ENCODE measurements at regions of chr9 and their contacts with region 1.

Region 1: GRCh38 chr9:95004411-95005277 is 278.1 kb downstream of the AOPEP start:
- DNase-seq: peak; percentile 48
- ATAC-seq: peak; percentile 79
- H3K4me3 ChIP-seq: peak overlapping the region; percentile 78 to 92 (median 86)
- H3K27ac ChIP-seq: peak overlapping the region; percentile 99
- H3K4me1 ChIP-seq: peaks cover 50% of the 10 kb centered on the region
- H3K27me3 ChIP-seq: no peaks in the 10 kb centered on the region; a peak in 1 of 5 replicates
- CTCF ChIP-seq: no peak
- EP300 ChIP-seq: peak in 1 of 2 experiments; percentile 38; a peak in 1 of 4 replicates
- POLR2A ChIP-seq: peak; percentile 56 to 63
- RAD21 ChIP-seq: peak; percentile 56

Region 2: DNA sequence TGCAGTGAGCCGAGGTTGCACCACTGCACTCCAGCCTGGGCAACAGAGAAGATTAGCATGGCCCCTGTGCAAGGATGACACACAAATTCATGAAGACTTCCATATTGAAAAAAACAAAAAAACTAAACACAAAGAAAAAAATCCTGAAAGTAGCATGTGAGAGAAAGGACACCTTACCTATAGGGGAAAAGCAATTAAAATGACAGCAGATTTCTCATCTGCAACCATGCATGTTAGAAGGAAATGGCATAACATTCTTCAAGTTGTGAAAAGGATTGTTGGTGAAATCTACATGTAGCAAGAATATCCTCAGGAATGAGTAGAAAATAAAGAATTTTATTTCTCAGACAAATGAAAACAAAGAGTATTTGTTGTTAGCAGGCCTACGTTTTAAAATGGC is 759.0 kb before region 1 on chr9:
- CTCF ChIA-PET with region 1: no interaction called
- POLR2A ChIA-PET with region 1: no interaction called
- in situ Hi-C with region 1: no loop called
- intact Hi-C with region 1: no loop called
- DNase-seq: no peak
- ATAC-seq: no peak
- H3K4me3 ChIP-seq: no peak overlapping the region
- H3K27ac ChIP-seq: no peak overlapping the region
- H3K4me1 ChIP-seq: no peaks in the 10 kb centered on the region
- H3K27me3 ChIP-seq: no peaks in the 10 kb centered on the region
- CTCF ChIP-seq: no peak
- EP300 ChIP-seq: no peak
- POLR2A ChIP-seq: no peak
- RAD21 ChIP-seq: no peak

Region 3: DNA sequence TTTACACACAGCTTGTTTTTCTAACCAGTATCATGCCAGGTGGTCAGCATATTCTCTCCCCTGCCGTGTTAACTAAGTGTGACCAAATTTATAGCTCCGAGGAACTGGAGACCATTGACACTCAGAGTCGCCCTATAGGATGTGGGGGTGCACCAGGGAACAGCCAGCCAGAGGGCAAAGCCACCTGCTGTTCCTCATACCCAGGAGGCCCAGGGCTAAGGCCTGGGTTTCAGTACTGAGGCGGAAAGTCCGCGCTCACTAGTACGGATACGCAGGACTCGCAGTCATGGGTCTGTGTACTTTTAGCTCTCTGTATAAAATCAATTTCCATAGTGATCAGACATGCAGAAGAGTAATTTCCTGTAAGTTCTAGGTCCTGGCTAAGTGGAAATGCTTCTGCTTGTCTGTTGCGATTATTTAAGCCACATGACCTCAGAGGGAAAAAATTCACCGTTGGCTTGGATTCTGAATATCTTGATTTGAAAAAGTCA is 31.1 kb before region 1 on chr9:
- CTCF ChIA-PET with region 1: no interaction called
- POLR2A ChIA-PET with region 1: interaction called, 4 read pairs
- in situ Hi-C with region 1: no loop called
- intact Hi-C with region 1: loop called (anchors 5 kb)
- DNase-seq: no peak
- ATAC-seq: no peak
- H3K4me3 ChIP-seq: no peak overlapping the region
- H3K27ac ChIP-seq: no peak overlapping the region
- H3K4me1 ChIP-seq: peaks cover 81% of the 10 kb centered on the region
- H3K27me3 ChIP-seq: no peaks in the 10 kb centered on the region
- CTCF ChIP-seq: no peak
- EP300 ChIP-seq: no peak
- POLR2A ChIP-seq: no peak
- RAD21 ChIP-seq: no peak

Region 4: GRCh38 chr9:95025213-95026147 is 20.8 kb after region 1 on chr9:
- CTCF ChIA-PET with region 1: no interaction called
- POLR2A ChIA-PET with region 1: interaction called, 83 read pairs
- in situ Hi-C with region 1: no loop called
- intact Hi-C with region 1: loop called (anchors 2 kb)
- DNase-seq: peak; percentile 80
- ATAC-seq: peak; percentile 46
- H3K4me3 ChIP-seq: 0 out of 6 replicates have a peak overlapping the region, but pooled peaks of 1 of the 3 experiments have one; percentile 47
- H3K27ac ChIP-seq: peak overlapping the region; percentile 94
- H3K4me1 ChIP-seq: peaks cover 100% of the 10 kb centered on the region
- H3K27me3 ChIP-seq: no peaks in the 10 kb centered on the region
- CTCF ChIP-seq: peak; percentile 44
- EP300 ChIP-seq: peak; percentile 28 to 35; a peak in 1 of 4 replicates
- POLR2A ChIP-seq: 0 out of 4 replicates have a peak, but pooled peaks of 1 of the 2 experiments have one; percentile 13
- RAD21 ChIP-seq: 0 out of 2 replicates have a peak, but pooled peaks have one; percentile 40

Region 5: DNA sequence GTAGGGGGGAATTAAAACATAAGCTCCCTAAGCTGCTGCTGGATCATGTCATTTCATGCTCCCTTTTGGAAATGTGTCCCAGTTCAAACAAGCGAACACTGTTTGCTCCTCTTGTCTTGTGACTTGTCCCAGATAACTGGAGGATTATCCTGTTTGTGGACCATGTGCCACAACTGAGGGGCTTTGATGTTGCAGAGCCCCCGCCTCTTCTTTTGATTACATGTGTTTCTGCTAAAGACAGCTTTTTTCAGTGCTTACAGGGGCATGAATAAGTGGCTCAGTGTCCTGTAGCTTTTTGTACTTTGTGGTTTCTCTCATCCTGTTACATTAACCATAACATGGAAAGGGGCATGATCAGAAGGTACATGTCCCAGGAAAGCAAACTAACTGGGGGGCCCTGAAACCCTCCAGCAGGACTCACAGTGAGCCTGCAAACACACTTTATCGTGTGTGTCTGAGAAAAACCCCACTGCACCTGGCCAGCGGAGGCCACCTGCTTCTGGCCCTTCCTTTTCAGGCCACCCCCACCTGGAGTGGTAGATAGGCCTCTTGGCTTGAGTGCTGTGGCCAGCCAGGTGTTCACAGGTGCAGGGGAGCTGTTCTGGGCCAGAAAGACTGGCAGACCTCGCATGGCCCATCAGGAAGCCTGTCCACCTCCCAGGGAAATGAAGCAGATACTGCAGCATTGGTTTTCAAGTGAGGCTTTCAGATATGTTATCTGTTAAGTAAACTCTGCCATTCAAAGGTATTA is 27.2 kb after region 1 on chr9:
- CTCF ChIA-PET with region 1: no interaction called
- POLR2A ChIA-PET with region 1: interaction called, 18 read pairs
- in situ Hi-C with region 1: no loop called
- intact Hi-C with region 1: no loop called
- DNase-seq: peak; percentile 98
- ATAC-seq: peak; percentile 82
- H3K4me3 ChIP-seq: peak overlapping the region in 1 of 3 experiments; percentile 48; a peak in 2 of 6 replicates
- H3K27ac ChIP-seq: peak overlapping the region; percentile 85
- H3K4me1 ChIP-seq: peaks cover 76% of the 10 kb centered on the region
- H3K27me3 ChIP-seq: no peaks in the 10 kb centered on the region
- CTCF ChIP-seq: no peak
- EP300 ChIP-seq: peak in 1 of 2 experiments; percentile 97; a peak in 3 of 4 replicates
- POLR2A ChIP-seq: peak; percentile 16 to 21; a peak in 2 of 4 replicates
- RAD21 ChIP-seq: no peak

Region 6: GRCh38 chr9:95065224-95065623 is 60.6 kb after region 1 on chr9:
- CTCF ChIA-PET with region 1: no interaction called
- POLR2A ChIA-PET with region 1: interaction called, 15 read pairs
- in situ Hi-C with region 1: no loop called
- intact Hi-C with region 1: loop called (anchors 5 kb)
- DNase-seq: no peak
- ATAC-seq: no peak
- H3K4me3 ChIP-seq: no peak overlapping the region
- H3K27ac ChIP-seq: peak overlapping the region; percentile 91
- H3K4me1 ChIP-seq: peaks cover 93% of the 10 kb centered on the region
- H3K27me3 ChIP-seq: no peaks in the 10 kb centered on the region
- CTCF ChIP-seq: no peak
- EP300 ChIP-seq: no peak
- POLR2A ChIP-seq: no peak
- RAD21 ChIP-seq: no peak

Region 7: DNA sequence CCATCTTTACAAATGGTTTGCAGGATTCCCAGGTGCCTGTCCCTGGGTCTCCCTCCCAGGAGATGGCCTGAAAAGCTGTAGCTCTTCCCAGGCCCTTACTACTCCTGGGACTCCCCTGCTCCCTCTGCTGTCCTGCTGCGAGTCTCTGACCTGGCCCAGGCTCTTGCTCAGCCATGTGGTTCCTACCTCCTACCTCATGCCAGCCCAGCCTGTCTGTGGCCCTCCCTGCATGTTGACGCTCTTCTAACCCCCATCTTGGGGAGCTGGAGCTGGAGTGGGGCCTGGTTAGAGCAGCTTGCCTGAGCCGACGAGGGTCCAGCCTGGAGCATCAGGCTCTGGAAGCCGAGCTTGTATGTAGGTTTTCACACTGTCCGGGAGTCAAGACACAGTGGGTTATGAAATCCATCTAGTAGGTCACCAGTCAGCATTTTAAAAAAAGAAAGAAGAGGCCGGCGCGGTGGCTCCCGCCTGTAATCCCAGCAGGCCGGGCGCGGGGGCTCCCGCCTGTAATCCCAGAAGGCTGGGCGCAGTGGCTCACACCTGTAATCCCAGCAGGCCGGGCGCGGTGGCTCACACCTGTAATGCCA is 68.5 kb after region 1 on chr9:
- CTCF ChIA-PET with region 1: no interaction called
- POLR2A ChIA-PET with region 1: interaction called, 15 read pairs
- in situ Hi-C with region 1: no loop called
- intact Hi-C with region 1: no loop called
- DNase-seq: peak; percentile 25
- ATAC-seq: peak; percentile 47
- H3K4me3 ChIP-seq: no peak overlapping the region
- H3K27ac ChIP-seq: no peak overlapping the region
- H3K4me1 ChIP-seq: peaks cover 48% of the 10 kb centered on the region
- H3K27me3 ChIP-seq: no peaks in the 10 kb centered on the region
- CTCF ChIP-seq: peak; percentile 58
- EP300 ChIP-seq: no peak
- POLR2A ChIP-seq: no peak
- RAD21 ChIP-seq: peak; percentile 65